HEK293 (cell line): ENCODE measurements at regions of chr19 and their contacts with region 1.

Region 1: GRCh38 chr19:30634996-30635975 is 263.1 kb downstream of the ZNF536 start:
- H3K4me3 ChIP-seq: no peak overlapping the region
- H3K27ac ChIP-seq: no peak overlapping the region
- H3K4me1 ChIP-seq: no peaks in the 10 kb centered on the region
- CTCF ChIP-seq: no peak

Region 2: DNA sequence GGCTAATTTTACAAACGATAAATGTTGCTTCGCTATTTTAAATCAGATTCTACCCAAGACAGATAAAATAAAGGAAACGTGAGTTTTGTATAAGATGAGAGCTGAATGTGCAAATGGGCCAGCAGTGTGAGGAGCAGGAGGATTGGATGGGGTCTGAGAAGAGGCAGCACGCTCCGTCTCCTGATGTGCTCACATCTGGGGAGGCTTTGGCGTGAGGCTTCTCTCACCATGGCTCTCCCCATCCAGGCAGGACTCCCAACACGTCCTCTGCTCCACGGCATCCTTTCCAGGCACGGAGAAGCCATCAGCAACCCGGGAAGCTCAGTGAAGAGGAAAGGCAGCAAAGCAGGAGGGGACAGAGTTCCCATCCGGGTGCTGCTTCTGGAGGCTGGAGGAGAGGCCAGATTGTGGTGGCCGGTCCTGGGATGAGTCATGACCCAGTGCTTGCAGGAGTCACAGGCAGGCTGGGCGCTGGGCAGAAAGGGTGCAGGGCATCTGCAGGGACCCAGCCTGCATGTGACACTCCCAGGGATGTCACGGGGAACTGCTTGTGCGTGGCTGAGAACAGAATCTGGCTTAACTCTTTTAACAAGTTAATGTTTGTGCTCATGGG is 215.6 kb before region 1 on chr19:
- CTCF ChIA-PET with region 1: no interaction called
- POLR2A ChIA-PET with region 1: no interaction called
- H3K4me3 ChIP-seq: no peak overlapping the region
- H3K27ac ChIP-seq: no peak overlapping the region
- H3K4me1 ChIP-seq: no peaks in the 10 kb centered on the region
- CTCF ChIP-seq: no peak

Region 3: GRCh38 chr19:30649934-30650614 is 14.8 kb after region 1 on chr19:
- CTCF ChIA-PET with region 1: interaction called, 18 read pairs
- POLR2A ChIA-PET with region 1: no interaction called
- H3K4me3 ChIP-seq: no peak overlapping the region
- H3K27ac ChIP-seq: no peak overlapping the region
- H3K4me1 ChIP-seq: peaks cover 4% of the 10 kb centered on the region; the same call in 1 of the 2 replicates
- CTCF ChIP-seq: peak; percentile 89